ENCODE measurements at regions of chr18 and their contacts with region 1.

Region 1: GRCh38 chr18:12236934-12237832 is 17.0 kb upstream of the CIDEA start:
- DNase-seq: peak; percentile 65 to 74
- H3K4me3 ChIP-seq: no peak overlapping the region
- H3K27ac ChIP-seq: no peak overlapping the region
- H3K4me1 ChIP-seq: peaks cover 0 to 8% (median 4%) of the 10 kb centered on the region in 4 donors
- H3K27me3 ChIP-seq: peaks cover 0 to 13% of the 10 kb centered on the region in 2 donors
- CTCF ChIP-seq: peak; percentile 73 to 88

Region 2: DNA sequence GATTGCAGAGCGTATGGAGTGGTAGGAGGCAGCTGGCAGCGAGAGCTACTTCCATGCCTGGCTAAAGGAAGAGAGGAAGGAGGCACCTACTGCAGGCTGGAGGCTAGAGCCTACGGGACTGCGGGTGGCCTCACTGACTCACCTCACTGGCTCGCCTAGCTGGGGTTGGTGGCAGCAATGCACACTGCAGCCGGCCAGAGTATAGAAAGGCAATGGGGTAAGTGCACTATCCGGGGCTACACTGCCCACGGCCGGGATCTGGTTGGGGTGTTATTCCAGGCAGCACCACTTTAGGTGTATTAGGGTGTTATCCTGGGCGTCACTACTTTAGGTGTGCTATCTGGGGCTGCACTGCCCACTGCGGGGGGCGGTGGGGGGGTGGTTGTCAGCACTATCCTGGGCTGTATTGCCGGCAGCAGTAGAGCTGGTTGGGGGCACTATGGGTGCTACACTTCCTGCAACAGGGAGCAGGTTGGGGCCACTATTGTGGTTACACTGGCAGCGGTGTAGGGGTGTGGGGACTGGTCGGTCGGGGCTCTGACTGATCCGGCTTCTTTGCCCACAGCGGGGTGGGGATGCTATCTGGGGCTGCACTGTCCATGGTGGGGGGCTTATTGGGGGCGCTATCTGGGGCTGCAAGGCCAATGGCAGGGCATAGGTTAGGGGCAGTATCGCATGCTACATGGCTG is 176.9 kb before region 1 on chr18:
- intact Hi-C with region 1: loop called (anchors 10 kb)
- DNase-seq: no peak
- H3K4me3 ChIP-seq: no peak overlapping the region
- H3K27ac ChIP-seq: no peak overlapping the region
- H3K4me1 ChIP-seq: no peaks in the 10 kb centered on the region
- H3K27me3 ChIP-seq: no peaks in the 10 kb centered on the region
- CTCF ChIP-seq: no peak